Activated CD4-positive, alpha-beta T cell treated with anti-CD3 and anti-CD28 coated beads for 36 hours (primary cell): ENCODE measurements at regions of chr20 and their contacts with region 1.

Region 1: DNA sequence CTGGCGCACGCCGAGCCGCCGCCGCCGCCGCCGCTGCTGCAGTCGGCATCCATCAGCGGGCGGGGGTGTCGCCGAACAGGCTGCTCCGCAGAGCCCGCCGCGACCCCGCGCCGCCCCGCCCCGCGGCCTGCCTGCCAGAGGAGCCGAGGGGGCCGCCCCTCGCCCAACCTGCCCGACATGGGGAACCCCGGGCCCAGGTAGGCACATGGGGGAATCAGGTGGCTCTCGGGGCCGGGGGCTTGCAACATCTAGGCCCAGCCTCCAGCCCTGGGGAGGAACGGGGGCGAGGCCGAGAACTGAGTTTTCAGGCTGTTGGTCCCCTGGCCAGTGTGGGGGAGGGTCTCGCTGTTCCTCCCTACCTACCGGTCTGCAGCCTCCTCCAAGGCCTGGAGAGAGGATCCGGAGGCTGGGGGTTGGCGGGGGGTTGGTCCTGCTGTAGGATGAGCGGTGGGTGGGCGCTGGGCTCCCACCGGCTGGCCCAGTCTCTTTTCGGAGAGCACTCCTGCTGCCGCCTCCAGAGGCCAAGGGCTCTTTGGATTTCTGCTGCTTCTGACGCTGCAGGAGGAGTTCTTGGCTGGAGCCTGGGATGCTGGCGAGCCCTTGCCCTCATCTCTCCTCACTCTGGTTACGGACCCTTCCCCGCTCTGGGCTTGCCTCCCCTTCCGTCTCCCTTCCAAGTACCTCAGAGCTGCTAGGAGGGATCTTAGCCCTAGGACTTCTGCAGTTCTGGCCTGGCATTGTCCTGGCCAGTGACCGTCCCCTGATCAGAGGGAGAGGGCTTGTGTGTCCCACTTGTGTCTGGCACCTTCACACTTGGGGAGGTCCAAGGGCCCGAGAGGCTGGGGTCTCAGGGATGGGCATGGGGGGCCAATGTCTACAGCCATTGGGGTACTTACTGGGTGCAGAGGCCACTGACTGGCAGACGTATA is at the start of gene EPB41L1:
- DNase-seq: no peak
- ATAC-seq: no peak
- H3K4me3 Mint-ChIP-seq: peak within 1 kb of the TSS; percentile 59
- H3K27ac Mint-ChIP-seq: no peak within 1 kb of the TSS
- H3K4me1 Mint-ChIP-seq: peaks cover 8% of the 10 kb centered on the region
- H3K27me3 Mint-ChIP-seq: peaks cover 19% of the 10 kb centered on the region
- total RNA-seq, gene EPB41L1: 0.67 to 1.5 TPM

Region 2: DNA sequence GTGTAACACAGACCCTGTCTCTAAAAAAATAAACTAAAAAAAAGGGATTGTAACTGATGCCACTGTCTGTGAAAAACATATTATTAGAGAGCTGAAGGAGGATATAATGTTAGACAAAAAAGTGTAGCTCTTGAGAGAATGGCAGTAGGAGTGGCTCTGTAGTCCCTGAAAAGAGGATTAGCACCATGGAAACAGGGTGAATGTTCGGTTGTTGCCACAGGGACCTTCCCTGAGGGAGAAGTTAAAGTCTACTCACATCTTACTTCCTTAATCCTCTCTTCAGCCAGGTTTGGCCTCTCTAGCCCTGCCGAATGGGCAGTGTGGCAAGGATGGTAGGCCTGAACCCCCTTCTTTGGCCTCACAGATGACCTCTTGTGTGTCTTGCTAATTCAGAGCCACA is 212.7 kb before region 1 on chr20:
- CTCF ChIA-PET with region 1: no interaction called
- POLR2A ChIA-PET with region 1: no interaction called
- intact Hi-C with region 1: no loop called
- DNase-seq: no peak
- ATAC-seq: no peak
- H3K4me3 Mint-ChIP-seq: no peak overlapping the region
- H3K27ac Mint-ChIP-seq: no peak overlapping the region
- H3K4me1 Mint-ChIP-seq: peaks cover under 1% of the 10 kb centered on the region
- H3K27me3 Mint-ChIP-seq: no peaks in the 10 kb centered on the region

Region 3: DNA sequence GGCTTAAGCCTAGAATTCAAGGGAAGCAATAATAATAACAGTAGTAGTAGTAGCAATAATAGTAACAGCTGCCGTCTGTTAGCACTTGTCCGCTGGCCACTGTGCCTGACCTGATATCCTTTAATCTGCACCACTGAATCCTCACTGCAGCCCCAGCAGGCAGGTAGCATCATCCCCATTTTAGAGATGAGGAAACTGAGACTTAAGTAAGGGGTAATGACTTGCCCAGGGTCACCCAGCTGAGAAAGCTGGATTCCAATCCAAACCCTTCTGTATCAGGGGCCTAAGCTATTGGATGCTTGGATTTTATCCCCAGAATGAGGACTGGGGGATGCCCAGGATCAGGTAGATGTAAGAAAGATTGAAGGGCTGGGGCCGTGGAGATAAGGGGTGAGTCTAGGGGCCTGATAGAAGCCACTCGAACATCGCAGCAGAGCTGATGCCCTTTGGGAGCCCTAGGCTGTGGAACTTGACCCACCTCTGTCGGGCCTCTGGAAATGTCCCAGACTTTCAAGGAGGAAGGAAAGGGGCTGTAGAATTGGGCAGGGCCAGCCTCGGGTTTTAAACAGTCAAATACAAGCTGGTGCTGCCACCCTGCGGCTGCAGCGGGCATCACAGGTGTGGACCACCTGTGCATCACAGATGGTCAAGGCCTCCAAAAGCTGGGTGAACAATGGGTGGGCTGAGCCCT is 284.2 kb after region 1 on chr20:
- CTCF ChIA-PET with region 1: interaction called, 7 read pairs
- POLR2A ChIA-PET with region 1: no interaction called
- intact Hi-C with region 1: loop called in 1 of 2 experiments (anchors 1 kb)
- DNase-seq: peak; percentile 81
- ATAC-seq: peak; percentile 45
- H3K4me3 Mint-ChIP-seq: no peak overlapping the region
- H3K27ac Mint-ChIP-seq: no peak overlapping the region
- H3K4me1 Mint-ChIP-seq: peaks cover 2% of the 10 kb centered on the region
- H3K27me3 Mint-ChIP-seq: no peaks in the 10 kb centered on the region